AG04449 (cell line): ENCODE measurements at regions of chr4 and their contacts with region 1.

Region 1: DNA sequence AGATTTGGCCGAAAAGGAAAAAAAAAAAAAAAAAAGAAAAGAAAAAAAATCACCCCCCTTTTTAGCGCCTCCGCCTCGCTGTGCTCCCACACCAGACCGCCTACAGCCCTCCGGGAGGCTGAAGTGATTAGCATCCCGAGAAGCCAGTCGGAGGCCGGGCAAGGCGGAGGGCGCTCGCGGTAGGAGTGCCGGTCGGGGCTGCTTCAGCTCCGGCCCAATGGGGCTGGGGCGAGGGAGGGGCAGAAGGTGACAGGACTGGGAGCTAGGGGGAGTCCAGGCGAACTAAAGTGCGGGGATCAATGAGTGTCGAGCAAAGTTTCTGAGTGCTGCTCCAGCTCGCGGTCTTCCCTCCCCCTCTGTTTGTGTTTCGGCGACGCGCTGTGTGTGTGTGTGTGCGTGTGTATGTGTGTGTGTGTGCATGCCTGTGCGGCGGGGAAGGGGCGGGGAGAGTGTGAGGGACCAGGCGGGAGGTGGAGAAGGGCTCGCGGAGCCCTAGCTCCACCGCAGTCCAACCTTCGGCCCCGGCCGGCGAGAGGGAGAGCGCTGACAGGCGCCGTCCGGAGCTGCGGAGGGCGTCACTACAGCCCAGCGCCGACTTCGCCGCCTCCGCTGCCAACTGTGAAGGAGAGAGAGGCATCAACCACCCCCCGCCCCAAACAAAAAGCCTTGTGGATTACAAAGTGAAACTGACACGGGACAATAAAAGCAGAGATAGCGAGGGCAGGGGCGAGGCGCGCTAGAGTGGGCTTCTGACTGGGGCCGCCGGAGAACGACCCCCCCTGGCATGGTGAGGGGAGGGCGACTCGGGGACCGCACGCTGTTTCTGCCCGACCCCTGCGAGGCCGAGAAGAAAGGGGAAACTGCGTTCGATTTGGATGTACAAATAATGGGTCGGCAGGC is at the start of gene FAT4:
- DNase-seq: peak; percentile 90
- H3K4me3 ChIP-seq: peak within 1 kb of the TSS; percentile 90
- CTCF ChIP-seq: peak; percentile 1

Region 2: DNA sequence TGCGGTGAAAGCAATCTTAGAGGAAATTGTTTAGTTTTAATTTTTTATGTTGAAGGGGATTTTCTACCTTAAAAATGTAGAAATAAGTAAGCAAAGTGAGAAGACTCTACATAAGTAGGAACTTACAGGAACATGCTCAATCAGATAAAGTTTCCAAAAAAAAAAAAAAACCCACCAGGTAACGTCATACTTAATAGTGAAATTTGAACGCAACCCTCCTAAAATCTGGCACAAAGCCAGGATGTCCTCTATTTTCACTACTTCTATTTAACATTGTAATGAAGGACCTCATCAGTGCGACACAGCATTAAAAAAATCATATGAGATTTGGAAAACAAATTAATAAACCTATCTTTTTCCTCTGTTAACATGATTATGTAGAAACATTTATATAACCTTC is 135.2 kb before region 1 on chr4:
- CTCF ChIA-PET with region 1: no interaction called
- POLR2A ChIA-PET with region 1: no interaction called
- DNase-seq: no peak
- H3K4me3 ChIP-seq: no peak overlapping the region
- CTCF ChIP-seq: no peak

Region 3: DNA sequence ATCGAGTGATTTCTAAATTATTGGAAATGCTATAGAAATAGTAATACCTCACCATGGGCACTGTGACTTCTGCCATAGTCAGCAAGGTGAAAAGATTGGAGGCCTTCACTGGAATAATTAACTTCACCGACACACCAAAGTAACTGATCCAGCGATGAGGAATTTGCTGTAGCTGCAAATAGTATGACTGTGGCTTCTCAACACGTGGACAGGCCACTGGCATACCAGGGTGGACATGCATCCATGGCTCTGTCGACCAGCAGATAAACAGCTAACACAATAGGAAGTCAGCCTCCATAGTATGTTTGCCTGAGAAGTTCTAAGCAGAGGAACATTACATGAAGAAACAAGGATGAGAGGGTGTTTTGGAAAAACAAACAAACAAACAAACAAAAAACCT is 11.1 kb before region 1 on chr4:
- CTCF ChIA-PET with region 1: interaction called, 12 read pairs
- POLR2A ChIA-PET with region 1: interaction called, 3 read pairs
- DNase-seq: no peak
- H3K4me3 ChIP-seq: no peak overlapping the region
- CTCF ChIP-seq: no peak

Region 4: DNA sequence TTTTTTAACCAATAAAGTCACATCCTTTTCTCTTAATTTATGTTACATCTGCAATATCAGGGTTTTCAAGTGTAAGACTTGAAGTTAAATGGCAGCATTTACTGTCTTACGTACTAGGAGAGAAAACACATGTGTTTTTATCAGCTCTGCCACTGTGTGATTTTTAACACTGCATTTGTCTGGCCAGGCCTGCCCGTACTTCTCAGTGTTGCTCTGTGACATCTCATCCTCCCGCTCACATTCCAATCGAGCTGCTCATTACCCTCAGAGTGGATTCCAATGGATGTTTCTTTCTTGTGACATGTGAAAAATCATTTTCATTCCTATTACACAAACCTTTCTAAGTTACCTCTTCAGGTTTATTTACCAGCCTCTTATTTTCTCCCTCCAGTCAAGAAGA is 420.2 kb after region 1 on chr4:
- CTCF ChIA-PET with region 1: interaction called, 14 read pairs
- POLR2A ChIA-PET with region 1: no interaction called
- DNase-seq: peak; percentile 59
- H3K4me3 ChIP-seq: no peak overlapping the region
- CTCF ChIP-seq: no peak

Region 5: DNA sequence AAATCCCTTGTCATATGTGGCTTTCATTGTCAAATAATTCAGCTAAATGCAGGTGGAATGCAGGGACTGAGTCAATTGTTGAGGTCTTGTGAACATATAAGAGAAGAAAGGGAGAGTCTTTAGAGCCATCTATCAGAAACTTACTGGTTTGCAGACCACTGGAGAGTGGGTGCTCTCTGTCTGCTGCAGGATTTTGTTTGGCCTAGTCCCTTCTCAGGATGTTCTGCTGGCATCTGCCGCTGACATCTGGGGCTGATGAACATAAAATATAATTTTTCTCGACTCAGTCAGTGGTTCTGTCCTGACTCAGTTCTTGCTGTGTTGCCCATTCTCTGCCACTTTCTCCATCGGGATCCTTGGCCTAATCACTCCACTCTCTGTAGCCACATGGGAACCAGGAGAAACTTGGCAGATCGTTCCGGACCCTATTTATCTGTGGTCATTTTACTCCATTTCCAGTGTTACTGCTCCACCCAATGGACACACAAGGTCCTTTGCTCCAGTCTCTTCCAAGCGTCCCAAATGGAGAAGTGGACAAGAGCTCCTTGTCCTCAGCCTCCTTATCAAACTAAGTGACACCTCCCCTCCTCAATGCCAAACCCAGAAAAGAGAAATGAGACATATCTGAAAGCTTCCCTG is 436.0 kb after region 1 on chr4:
- CTCF ChIA-PET with region 1: interaction called, 13 read pairs
- POLR2A ChIA-PET with region 1: no interaction called
- DNase-seq: no peak
- H3K4me3 ChIP-seq: no peak overlapping the region
- CTCF ChIP-seq: peak; percentile 10

Region 6: GRCh38 chr4:126604268-126604867 is 1289.4 kb after region 1 on chr4:
- CTCF ChIA-PET with region 1: interaction called, 10 read pairs
- POLR2A ChIA-PET with region 1: no interaction called
- DNase-seq: no peak
- H3K4me3 ChIP-seq: no peak overlapping the region
- CTCF ChIP-seq: peak; percentile 59